Heart right ventricle (tissue), 16 donors: ENCODE measurements at regions of chr6 and their contacts with region 1.

Region 1: DNA sequence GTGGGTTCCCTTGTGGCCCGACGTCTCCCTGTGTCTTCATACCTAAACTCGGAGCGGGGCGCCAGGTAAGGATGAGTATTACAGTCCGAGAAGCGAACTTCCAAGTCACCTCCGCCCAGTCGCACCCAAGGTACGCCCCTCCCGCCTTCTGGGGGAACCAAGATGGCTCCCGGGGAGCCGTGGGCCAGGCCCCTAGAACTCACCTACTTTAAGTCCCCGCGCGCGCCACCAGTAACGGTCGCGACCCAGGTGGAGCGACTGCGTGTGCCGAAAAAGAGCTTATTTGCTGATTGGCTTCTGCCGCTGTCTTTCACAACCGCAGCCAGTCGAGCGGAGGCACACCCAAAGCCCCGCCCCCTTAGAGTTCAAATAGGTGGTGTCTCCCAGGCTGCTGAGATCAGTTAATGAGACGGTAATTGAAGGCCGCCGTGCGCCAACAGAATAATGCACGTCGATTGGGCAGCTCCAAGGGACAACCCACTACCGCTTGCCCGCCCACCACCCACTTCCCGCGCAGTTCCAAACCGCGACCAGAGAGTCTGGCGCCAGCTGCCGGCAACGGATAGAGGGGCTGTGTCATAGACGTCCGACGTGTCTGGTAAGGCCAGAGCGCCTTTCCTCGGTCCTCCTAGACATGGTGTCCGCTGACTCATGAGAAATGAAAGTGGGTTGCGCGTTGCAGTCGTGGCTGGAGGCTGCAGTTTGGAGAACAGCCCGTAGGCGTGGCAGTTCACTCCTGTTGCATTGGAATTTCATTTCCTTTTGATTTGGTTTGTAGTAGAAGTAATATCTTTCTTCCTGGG is at the start of gene MDC1:
- DNase-seq: peak; percentile 99 to 100
- ATAC-seq: peak; percentile 83 to 93 (median 86)
- H3K4me3 ChIP-seq: peak within 1 kb of the TSS; percentile 57 to 92 (median 69)
- H3K27ac ChIP-seq: peak within 1 kb of the TSS; percentile 76 to 99 (median 94)
- H3K4me1 ChIP-seq: peaks cover 5 to 39% (median 36%) of the 10 kb centered on the region in 9 donors
- H3K27me3 ChIP-seq: no peaks in the 10 kb centered on the region
- CTCF ChIP-seq: peak; percentile 7 to 52 (median 44)
- total RNA-seq, gene MDC1: 15.3 to 21.7 (median 19.5) TPM

Region 2: GRCh38 chr6:30497714-30498113 is 219.5 kb before region 1 on chr6:
- intact Hi-C with region 1: no loop called
- DNase-seq: no peak
- ATAC-seq: no peak
- H3K4me3 ChIP-seq: no peak overlapping the region
- H3K27ac ChIP-seq: peak overlapping the region in 2 of 10 donors; percentile 31 to 76
- H3K4me1 ChIP-seq: peaks cover 0 to 68% (median 18%) of the 10 kb centered on the region in 9 donors
- H3K27me3 ChIP-seq: no peaks in the 10 kb centered on the region
- CTCF ChIP-seq: no peak

Region 3: GRCh38 chr6:30556066-30556905 is 161.0 kb before region 1 on chr6 and contains the start of gene GNL1:
- intact Hi-C with region 1: loop called in 3 of 10 experiments (anchors 5 to 10 kb)
- DNase-seq: peak; percentile 92 to 95
- ATAC-seq: peak; percentile 78 to 91 (median 84)
- H3K4me3 ChIP-seq: peak within 1 kb of the TSS; percentile 65 to 99 (median 94)
- H3K27ac ChIP-seq: peak within 1 kb of the TSS; percentile 92 to 99 (median 96)
- H3K4me1 ChIP-seq: peaks cover 7 to 34% (median 29%) of the 10 kb centered on the region in 9 donors
- H3K27me3 ChIP-seq: no peaks in the 10 kb centered on the region
- CTCF ChIP-seq: peak in 2 of 9 donors; percentile 8 to 16
- total RNA-seq, gene GNL1: 17.3 to 34.1 (median 19.8) TPM

Region 4: DNA sequence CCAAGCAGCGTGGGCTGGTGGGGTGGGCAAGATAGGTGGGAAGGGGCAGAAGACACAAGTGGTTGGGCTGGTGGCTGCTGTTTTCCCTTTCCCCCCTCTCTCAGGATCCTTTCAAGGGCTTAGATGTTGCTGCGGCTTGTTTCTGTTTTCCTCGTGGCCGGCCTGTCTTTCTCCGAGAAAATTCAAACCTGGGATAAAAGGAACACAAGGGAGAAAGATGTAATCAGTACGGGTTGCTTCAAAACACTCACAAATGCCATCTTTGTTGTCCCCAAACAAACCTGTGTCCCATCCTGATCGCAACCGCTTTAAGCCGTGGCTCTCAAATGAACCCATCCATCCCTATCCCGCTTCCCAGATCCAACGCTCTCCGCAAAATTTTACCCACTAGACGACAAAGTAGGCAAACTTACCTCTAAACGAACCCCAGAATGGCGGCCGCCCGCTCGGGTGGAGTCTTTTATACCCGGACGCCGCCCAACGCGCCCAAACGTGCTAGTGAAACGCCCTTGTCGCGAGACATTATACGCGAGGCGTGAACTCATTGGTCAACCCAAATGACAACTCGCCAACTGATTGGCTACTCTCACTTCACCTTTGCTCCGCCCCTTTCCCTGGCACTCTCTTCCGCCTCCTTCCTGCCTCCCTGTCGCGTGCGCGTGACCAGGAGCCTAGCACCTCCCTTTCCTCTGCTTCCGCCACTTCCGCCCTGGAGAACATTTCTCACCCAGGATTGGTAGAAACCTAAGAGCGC is 100.3 kb before region 1 on chr6 and contains the start of gene PPP1R10:
- intact Hi-C with region 1: loop called in 5 of 10 experiments (anchors 1 to 5 kb)
- DNase-seq: peak; percentile 97 to 100
- ATAC-seq: peak; percentile 89 to 94 (median 92)
- H3K4me3 ChIP-seq: peak within 1 kb of the TSS; percentile 57 to 94 (median 76)
- H3K27ac ChIP-seq: peak within 1 kb of the TSS; percentile 86 to 98 (median 95)
- H3K4me1 ChIP-seq: peaks cover 12 to 44% (median 40%) of the 10 kb centered on the region in 9 donors
- H3K27me3 ChIP-seq: no peaks in the 10 kb centered on the region
- CTCF ChIP-seq: no peak
- total RNA-seq, gene PPP1R10: 24.9 to 51.1 (median 33.1) TPM

Region 5: DNA sequence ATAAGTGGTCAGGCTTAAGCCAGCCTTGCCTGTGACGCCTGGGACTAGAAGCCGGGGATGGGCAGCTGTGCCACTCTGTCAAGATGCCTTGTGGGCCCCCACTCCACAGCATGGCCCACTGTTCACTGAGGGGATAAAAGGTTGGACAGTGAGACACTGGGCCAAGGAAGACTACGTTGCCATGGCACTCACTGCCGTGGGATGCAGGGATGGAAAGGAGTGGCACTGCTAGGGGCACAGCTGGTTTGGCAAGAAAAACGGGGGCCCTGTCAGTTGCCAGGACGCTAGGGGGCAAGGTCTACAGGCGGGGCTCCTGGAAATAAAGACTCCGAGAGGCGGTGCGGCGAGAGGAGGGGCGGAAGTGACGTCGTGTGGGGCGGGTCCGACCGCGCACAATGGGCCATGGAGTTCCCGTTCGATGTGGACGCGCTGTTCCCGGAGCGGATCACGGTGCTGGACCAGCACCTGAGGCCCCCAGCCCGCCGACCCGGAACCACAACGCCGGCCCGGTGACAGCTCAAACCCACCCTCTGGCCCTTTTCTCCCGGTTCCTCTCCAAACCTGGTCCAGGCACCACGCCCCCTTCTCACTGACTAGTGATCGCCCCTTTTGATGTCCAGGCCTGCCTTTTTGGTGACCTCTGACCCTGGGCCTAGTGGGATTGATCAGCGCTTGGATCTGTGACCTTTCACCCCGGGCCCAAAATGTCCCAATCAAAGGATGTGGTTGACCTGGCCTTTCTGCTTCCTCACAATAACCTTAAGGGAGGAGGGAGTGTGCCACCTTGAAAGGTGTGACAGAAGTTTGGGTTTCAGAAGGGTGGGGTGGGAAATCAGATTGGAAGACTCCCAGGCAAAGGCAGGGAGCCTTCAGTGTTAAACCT is 90.5 kb before region 1 on chr6 and contains the start of gene ATAT1:
- intact Hi-C with region 1: loop called in 1 of 10 experiments (anchors 5 kb)
- DNase-seq: peak; percentile 89 to 91
- ATAC-seq: peak; percentile 94 to 99 (median 97)
- H3K4me3 ChIP-seq: peak within 1 kb of the TSS; percentile 38 to 86 (median 60)
- H3K27ac ChIP-seq: peak within 1 kb of the TSS; percentile 74 to 94 (median 84)
- H3K4me1 ChIP-seq: peaks cover 3 to 20% (median 10%) of the 10 kb centered on the region in 9 donors
- H3K27me3 ChIP-seq: no peaks in the 10 kb centered on the region
- CTCF ChIP-seq: peak in 7 of 9 donors; percentile 16 to 63 (median 48)
- total RNA-seq, gene ATAT1: 1.8 to 4.6 (median 2.8) TPM

Region 6: DNA sequence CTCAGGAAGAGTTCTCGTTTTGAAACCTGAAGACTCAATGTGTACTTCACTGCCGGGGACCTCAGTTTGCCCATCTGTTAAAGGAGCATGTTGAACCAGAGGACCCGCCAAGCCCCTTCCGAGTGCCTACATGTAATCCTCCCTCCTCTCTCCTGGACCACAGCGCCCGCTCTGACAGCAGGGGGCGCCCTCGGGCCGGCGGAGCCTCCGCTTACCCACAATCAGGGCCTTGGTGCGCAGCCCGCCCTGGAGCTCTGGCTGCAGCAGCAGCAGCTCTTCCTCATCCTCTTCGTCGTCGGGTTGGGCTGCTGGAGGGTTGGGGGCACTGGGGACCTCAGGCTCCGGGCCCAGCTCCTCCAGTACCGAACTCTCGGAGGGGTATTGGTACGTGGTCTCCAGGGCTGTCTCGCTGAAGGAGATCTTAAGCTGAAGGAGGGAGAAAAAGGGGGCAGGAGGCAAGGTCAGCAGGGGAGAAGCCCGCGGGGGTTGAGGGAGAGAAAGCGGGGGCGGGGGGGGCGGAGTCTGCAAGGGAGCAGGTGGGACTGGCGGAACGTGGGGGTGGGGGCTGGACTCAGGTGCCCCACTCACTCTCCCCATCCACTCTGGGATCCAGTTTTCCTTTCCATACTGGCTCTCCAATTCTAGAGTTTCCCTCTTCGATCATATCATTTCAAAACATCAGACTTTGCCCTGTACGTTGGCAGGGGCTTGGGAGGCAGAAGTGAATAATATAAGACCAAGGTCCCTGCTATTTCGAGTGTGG is 38.1 kb before region 1 on chr6:
- intact Hi-C with region 1: loop called (anchors 1 to 2 kb)
- DNase-seq: peak; percentile 87 to 92
- ATAC-seq: peak; percentile 71 to 84 (median 74)
- H3K4me3 ChIP-seq: peak overlapping the region in 7 of 10 donors; percentile 3 to 75 (median 22)
- H3K27ac ChIP-seq: peak overlapping the region in 8 of 10 donors; percentile 8 to 100 (median 34)
- H3K4me1 ChIP-seq: peaks cover 14 to 57% (median 52%) of the 10 kb centered on the region in 9 donors
- H3K27me3 ChIP-seq: no peaks in the 10 kb centered on the region
- CTCF ChIP-seq: peak in 8 of 9 donors; percentile 93 to 97 (median 96)

Region 7: DNA sequence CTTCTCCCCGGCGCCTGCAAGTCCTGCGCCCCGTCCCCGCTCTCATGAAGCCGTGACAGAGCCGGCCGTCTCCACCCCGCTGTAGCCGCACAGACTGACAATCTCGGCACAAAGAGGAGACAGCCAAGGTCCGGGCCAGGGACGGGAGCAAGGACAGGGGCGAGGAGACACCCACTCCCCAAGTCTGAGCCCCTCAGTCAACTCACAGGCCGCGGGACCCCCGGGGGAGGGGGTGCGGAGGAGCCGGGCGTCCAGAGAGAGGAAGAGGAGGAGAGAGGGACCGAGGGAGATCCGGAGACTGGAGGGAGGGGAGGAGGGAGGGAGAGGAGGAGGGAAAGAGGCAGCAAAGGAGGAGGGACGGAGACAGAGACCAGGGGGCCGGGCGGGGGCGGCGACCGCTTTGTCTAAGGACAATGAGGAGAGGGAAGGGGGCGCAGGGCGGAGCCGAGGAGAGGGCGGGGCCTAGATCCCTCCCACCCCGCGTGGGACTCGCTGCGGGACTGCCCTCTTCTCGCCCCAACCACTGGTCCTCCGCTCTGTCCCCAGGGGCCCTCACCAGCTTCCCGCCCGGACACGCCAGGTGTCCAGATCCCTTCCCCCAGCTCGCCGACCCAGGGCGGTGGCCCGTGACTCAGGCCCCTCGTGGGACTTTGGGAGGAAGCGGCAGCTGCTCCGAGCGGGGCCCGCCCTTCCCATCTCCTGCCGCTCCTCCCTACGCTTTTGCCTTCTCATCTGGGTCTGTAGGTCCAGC is 30.2 kb before region 1 on chr6:
- intact Hi-C with region 1: loop called in 7 of 10 experiments (anchors 1 to 2 kb)
- DNase-seq: peak; percentile 96 to 98
- ATAC-seq: peak; percentile 73 to 87 (median 80)
- H3K4me3 ChIP-seq: peak overlapping the region; percentile 44 to 90 (median 80)
- H3K27ac ChIP-seq: peak overlapping the region; percentile 94 to 100 (median 98)
- H3K4me1 ChIP-seq: peaks cover 20 to 80% (median 58%) of the 10 kb centered on the region in 9 donors
- H3K27me3 ChIP-seq: no peaks in the 10 kb centered on the region
- CTCF ChIP-seq: no peak

Region 8: GRCh38 chr6:30877419-30878371 is 160.5 kb after region 1 on chr6:
- intact Hi-C with region 1: loop called in 3 of 10 experiments (anchors 5 to 10 kb)
- DNase-seq: peak; percentile 86 to 92
- ATAC-seq: peak; percentile 87 to 92 (median 89)
- H3K4me3 ChIP-seq: peak overlapping the region in 9 of 10 donors; percentile 14 to 49 (median 40)
- H3K27ac ChIP-seq: peak overlapping the region in 9 of 10 donors; percentile 3 to 86 (median 78)
- H3K4me1 ChIP-seq: peaks cover 9 to 33% (median 18%) of the 10 kb centered on the region in 9 donors
- H3K27me3 ChIP-seq: no peaks in the 10 kb centered on the region
- CTCF ChIP-seq: peak; percentile 71 to 95 (median 88)